ENCODE measurements at regions of chr3 and their contacts with region 1.

Region 1: DNA sequence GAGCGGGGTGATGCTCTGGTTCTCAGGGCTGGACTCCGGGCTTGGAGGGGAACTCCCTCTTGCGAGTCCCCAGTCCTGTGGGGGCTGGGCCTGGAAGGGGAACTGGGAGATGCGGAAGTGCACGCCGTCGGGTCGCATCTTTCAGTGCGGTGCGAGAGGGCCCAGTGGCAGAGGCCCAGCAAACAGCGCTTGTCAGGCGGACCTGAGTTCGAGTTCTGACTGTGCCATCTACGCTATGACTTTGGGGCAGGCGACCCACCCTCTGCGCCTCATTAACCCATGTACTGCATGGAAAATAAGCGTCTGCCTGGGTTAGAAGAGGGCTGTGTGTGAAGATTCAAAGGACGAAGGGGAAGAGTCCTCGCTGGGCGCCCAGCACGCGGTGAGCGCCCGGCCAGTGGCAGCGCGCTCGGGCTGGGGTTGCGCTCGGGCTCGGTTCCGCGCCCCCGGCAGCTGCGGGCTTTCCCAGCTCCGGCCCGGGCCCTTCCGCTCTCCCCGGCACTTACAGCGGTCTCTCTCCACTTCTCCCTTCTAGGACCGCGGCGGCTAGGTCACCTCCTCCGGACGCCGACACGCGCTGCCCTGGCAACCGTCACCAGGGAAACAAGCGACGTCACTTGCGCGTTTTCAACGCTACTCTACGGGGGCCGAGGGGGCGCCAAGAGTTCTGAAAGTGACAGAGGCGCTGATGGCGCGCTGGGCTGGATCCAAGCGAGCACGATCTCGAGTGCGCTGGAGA is at the start of gene CCDC13:
- DNase-seq: peak; percentile 80
- H3K4me3 ChIP-seq: peak within 1 kb of the TSS; percentile 45 to 52 (median 47)
- H3K27ac ChIP-seq: no peak within 1 kb of the TSS
- H3K4me1 ChIP-seq: peaks cover 9% of the 10 kb centered on the region
- H3K27me3 ChIP-seq: no peaks in the 10 kb centered on the region
- CTCF ChIP-seq: no peak
- total RNA-seq, gene CCDC13: 0.49 to 0.50 TPM

Region 2: DNA sequence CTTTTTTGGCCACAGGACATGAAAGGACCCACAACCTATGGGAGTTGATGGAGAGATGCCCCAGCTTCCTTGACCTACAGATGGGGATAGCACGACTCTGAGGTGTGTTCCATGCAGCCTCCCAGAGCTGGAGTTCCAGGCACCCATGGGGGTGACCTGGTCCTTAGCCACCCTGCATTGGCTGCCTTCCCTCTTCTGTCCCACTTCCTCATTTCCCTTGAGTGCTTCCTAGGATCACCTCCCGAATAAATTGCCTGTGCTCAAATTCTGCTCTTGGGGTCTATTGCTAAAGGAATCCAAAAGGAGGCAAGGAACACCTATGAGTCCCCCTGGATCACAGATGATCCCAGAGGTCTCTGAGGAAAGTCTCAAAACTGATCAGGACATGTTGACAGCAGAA is 295.1 kb before region 1 on chr3:
- CTCF ChIA-PET with region 1: no interaction called
- dilution Hi-C with region 1: no loop called
- in situ Hi-C with region 1: no loop called
- intact Hi-C with region 1: no loop called
- DNase-seq: no peak
- H3K4me3 ChIP-seq: no peak overlapping the region
- H3K27ac ChIP-seq: no peak overlapping the region
- H3K4me1 ChIP-seq: peaks cover 28% of the 10 kb centered on the region
- H3K27me3 ChIP-seq: no peaks in the 10 kb centered on the region
- CTCF ChIP-seq: no peak

Region 3: DNA sequence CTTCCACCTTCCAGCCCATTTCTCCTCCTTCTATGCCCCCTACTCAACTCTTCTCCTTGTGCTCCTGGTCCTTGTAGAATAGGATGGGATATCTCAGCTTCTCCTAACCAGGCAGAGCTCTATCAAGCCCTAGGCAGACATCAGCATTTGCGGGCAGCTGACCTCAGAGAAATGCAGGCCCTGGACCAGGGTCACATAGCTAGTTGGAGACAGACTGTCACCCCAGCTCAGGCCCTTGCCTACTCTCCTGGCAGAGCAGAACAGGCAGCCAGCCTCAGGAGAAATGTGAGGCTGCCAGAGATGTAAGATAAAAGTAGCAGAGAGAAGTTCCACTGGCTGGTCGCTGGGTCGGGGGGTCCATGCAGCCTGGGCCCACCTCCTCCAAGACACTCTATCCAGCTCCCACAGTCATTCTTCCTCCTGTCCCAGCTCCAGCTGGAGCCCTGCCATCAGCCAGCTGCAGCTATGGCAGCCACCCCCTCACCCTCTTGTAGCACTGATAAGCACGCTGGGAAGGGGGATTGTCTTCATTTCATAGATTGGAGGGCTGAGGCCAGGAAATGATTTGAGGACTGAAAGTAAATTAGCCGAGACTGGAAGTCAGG is 98.9 kb after region 1 on chr3:
- CTCF ChIA-PET with region 1: no interaction called
- dilution Hi-C with region 1: no loop called
- in situ Hi-C with region 1: loop called in 1 of 2 experiments (anchors 10 kb)
- intact Hi-C with region 1: no loop called
- DNase-seq: no peak
- H3K4me3 ChIP-seq: no peak overlapping the region
- H3K27ac ChIP-seq: no peak overlapping the region
- H3K4me1 ChIP-seq: no peaks in the 10 kb centered on the region
- H3K27me3 ChIP-seq: no peaks in the 10 kb centered on the region
- CTCF ChIP-seq: no peak

Measured in mammary epithelial cell (primary cell).